ENCODE measurements at regions of chr5 and their contacts with region 1.

Region 1: DNA sequence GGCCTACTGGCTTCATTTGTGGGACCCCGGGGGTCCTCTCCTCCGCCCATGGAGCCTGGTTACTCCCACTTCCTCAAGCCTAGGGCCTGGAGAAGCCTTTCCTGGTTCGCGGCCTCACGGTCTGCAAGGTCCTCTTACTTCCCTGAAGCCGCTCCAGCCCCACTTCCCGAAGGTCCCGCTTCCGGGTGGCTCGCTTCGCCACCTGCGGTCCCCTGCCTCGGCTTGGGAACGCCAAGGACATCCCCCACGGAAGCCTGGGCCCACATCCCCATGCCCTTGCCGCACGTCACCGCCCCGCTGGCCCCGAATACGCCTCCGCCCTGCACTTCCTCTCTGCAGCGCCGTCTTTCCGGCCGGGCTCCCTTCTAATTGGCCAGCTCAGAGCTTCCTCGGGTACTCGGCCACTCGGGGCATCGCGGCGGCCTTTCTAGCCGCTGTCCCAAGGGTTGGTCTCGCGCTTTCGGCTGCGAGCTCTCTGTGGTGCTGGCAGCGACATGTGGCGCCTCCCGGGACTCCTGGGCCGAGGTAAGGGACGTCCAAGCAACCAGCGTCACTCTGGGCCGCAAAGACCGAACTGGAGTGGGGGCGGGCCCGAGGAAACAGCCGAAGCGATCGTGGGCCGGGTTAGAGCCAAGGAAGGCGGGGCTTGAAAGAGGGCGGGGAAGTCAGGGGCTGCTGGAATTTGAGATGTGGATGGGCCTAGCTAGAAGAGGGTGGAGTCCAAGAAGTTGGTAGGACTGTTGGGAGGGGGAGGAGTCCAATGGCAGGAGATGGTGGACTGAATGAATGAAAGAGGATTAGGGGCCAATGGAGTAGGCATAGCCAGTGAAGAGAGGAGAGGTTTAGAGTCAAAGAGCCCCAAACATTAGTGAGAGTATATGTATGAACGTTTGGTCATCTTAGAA is at the start of gene DELE1:
- DNase-seq: peak; percentile 93
- ATAC-seq: peak; percentile 96
- H3K4me3 Mint-ChIP-seq: peak within 1 kb of the TSS; percentile 67
- H3K27ac Mint-ChIP-seq: peak within 1 kb of the TSS; percentile 87
- H3K4me1 Mint-ChIP-seq: peaks cover 15% of the 10 kb centered on the region
- H3K27me3 Mint-ChIP-seq: no peaks in the 10 kb centered on the region
- CTCF ChIP-seq: no peak
- total RNA-seq, gene DELE1: 79.3 to 83.8 TPM (median 81.5 TPM) in 3 replicates

Region 2: GRCh38 chr5:141742866-141743851 is 180.5 kb before region 1 on chr5:
- CTCF ChIA-PET with region 1: no interaction called
- POLR2A ChIA-PET with region 1: no interaction called
- DNase-seq: peak; percentile 84
- ATAC-seq: peak; percentile 58
- H3K4me3 Mint-ChIP-seq: no peak overlapping the region
- H3K27ac Mint-ChIP-seq: no peak overlapping the region
- H3K4me1 Mint-ChIP-seq: peaks cover 19% of the 10 kb centered on the region
- H3K27me3 Mint-ChIP-seq: no peaks in the 10 kb centered on the region; the same call in 1 of the 2 replicates
- CTCF ChIP-seq: no peak

Region 3: DNA sequence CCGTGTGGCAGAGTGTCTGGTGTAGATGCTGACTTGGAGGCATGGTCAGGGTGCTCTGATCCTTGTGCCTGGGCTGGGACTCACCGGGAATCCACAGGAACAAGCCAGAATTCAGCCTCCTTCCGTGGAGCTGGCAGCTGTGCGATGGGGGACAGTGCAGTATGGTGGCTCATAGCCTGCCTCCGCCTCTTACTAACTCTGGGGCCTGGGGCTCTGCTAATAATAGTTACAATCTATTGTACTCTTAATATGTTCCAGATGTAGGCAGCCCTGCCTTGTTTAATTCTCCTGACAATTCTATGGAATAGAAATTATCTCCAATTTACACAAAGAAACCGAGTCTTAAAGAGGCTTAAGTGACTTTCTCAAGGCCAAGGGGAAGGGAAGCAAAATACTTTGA is 123.1 kb before region 1 on chr5:
- CTCF ChIA-PET with region 1: no interaction called
- POLR2A ChIA-PET with region 1: no interaction called
- DNase-seq: no peak
- ATAC-seq: no peak
- H3K4me3 Mint-ChIP-seq: no peak overlapping the region
- H3K27ac Mint-ChIP-seq: no peak overlapping the region
- H3K4me1 Mint-ChIP-seq: peaks cover 33% of the 10 kb centered on the region
- H3K27me3 Mint-ChIP-seq: peaks cover 3% of the 10 kb centered on the region; the same call in 1 of the 2 replicates
- CTCF ChIP-seq: no peak

Region 4: GRCh38 chr5:141940695-141941271 is 17.1 kb after region 1 on chr5:
- CTCF ChIA-PET with region 1: interaction called, 11 read pairs
- POLR2A ChIA-PET with region 1: interaction called, 5 read pairs
- DNase-seq: no peak
- ATAC-seq: peak; percentile 24
- H3K4me3 Mint-ChIP-seq: no peak overlapping the region
- H3K27ac Mint-ChIP-seq: peak overlapping the region; percentile 81
- H3K4me1 Mint-ChIP-seq: peaks cover 11% of the 10 kb centered on the region
- H3K27me3 Mint-ChIP-seq: no peaks in the 10 kb centered on the region; the same call in 1 of the 2 replicates
- CTCF ChIP-seq: no peak

Measured in WTC11 (cell line).